Right ventricle myocardium superior (tissue), 1 donor: ENCODE measurements at regions of chr22 and their contacts with region 1.

Region 1: GRCh38 chr22:28600546-28601143 is 79.0 kb downstream of the TTC28 start:
- DNase-seq: no peak
- ATAC-seq: peak; percentile 56

Region 2: GRCh38 chr22:28716686-28717085 is 116.0 kb after region 1 on chr22:
- intact Hi-C with region 1: no loop called
- DNase-seq: no peak
- ATAC-seq: no peak

Region 3: DNA sequence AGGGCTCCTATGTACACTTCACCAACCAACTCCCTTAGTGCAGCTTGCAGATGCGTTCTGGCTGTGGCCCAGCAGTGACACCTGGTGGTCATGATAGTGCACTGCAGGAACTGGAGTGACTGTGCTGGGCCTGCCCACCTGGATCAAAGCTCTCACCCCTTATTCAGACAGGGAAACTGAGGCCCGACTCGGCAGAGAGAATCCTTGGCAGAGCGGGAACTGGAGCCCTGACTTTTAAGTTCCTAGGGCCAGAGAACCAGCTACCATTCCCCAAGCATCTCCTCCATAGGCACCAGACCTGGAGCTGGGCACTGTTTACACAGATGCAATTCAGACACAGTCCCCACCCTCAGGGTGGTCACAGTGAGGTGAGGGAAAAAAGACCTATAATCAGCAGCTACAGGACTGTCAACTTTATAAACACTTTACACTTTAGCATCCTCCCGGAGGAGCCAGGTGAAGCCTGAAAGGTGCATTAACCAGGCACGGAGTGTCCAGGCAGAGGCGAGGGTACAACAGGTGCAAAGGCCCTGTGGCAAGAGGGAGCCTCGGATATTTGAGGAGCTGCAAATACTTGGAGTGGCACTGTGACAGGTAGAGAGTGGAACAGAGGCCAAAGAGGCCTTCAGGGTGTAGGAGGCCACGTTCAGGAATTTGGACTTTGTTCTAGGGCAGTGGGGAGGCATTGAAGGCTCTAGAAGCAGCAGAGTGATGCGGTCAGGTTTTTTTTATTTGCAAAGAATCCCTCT is 645.2 kb after region 1 on chr22:
- intact Hi-C with region 1: loop called (anchors 10 kb)
- DNase-seq: peak; percentile 80
- ATAC-seq: peak; percentile 96